Right cardiac atrium (tissue), 5 donors: ENCODE measurements at regions of chr1 and their contacts with region 1.

Region 1: DNA sequence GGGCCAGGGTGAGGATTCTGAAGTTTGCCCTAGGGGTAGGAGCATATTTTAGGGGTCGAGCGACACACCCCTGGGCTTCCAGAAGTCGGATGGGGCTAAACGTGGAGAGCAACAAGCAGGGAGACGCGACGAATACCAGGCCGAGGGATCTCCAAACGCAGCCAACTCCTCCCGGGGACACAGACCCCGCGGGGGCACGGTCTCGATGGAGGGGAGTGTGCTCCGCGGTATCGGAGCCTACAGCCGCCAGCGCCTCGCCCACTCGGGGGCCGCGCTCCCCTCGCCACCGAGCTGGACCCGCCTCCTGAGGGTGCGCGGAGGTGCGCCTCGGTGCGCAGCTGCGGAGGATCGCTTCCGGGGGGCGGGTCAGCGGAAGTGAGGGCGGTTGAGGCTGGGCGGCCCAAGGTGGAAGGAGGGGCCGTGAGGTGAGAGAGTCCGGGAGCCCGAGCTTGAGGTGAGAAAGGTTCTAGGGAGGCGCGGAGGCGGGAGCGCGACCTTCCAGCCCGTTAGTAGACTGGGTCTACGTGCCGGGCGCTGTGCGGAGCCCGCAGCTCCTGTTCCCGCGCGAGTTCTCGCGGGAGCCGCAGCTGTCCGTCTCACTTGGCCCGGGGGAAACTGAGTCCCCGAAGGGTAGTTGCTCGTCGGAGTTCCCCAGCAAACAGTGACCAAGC is at the start of gene MTFR1L:
- DNase-seq: peak; percentile 89 to 96 (median 95)
- ATAC-seq: peak; percentile 93
- H3K4me3 ChIP-seq: peak within 1 kb of the TSS; percentile 88
- H3K27ac ChIP-seq: peak within 1 kb of the TSS; percentile 90
- H3K4me1 ChIP-seq: peaks cover 14% of the 10 kb centered on the region
- H3K27me3 ChIP-seq: no peaks in the 10 kb centered on the region
- total RNA-seq, gene MTFR1L: 125 to 195 (median 180) TPM

Region 2: DNA sequence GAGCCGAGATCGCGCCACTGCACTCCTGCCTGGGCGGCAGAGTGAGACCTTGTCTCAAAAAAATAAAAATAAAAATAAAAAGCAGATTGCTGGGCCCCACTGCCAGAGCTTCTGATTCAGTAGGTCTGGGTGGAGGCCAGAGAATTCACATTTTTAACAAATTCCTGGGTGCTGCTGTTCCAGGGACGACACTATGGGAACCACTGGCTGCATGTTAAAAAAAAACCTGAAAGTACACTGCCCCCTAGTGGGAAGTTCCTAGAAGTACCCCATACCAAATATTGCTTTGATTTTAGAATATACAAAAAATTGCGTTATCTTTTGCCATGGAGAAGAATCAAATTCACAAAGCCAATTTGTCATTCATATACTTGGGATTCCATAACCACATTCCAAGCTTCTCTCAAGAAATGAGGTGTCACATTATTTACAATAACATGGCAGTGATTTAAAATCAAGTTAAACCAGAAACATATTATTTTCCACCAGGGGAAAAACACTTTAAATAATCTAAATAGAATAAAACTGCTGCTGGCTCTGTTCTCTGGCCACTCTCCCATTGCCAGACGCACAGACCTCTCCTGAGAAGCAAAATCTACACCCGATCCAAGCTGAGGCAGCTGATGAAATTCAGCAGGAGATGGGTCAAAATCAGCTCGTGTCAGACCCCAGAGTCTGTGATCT is 614.8 kb before region 1 on chr1:
- intact Hi-C with region 1: no loop called
- DNase-seq: peak in 1 of 3 donors; percentile 6
- ATAC-seq: peak in 1 of 2 donors; percentile 56
- H3K4me3 ChIP-seq: no peak overlapping the region
- H3K27ac ChIP-seq: no peak overlapping the region
- H3K4me1 ChIP-seq: no peaks in the 10 kb centered on the region
- H3K27me3 ChIP-seq: no peaks in the 10 kb centered on the region

Region 3: DNA sequence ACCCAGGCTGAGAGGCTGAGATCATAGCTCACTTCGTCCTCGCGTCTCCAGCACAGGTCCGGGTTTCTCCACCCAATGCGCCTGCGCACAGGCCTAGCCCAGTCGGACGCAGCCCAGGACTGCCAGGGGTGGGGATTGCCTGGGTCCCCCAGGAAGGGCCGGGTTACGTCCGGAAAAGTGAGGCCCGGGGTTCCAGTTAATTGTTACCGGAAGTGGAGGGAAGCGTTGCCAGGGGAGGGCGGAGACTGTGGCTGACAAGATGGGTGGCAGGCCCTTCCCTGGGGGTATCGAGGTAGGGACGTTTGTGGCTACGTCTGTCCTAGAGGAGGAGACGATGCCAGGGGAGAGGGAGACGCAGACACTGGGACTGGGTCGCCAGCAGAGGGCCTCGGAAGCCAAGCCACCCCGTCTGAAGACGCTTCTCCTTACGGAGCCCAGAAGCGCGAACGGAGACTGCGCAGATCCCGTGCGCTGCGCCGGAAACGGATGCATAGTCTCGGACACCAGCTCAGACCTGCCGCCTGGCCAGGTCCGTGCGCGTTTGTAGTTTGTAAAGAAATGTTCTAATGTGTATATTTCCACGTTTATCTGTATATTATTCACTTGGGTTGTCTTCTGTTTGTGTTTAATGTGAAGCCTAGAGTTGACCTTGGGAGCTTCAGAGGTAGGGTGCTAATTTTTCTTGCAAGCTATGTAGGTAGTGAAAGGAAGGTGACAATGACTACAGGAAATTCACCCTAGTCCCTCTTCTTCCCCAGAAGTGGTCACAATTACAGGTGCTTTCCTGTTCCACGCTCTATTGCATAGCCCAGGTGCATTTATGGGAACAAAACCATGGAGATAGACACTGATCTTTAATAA is 579.8 kb before region 1 on chr1:
- intact Hi-C with region 1: loop called in 1 of 4 experiments (anchors 10 kb)
- DNase-seq: peak; percentile 95 to 97 (median 97)
- ATAC-seq: peak; percentile 96
- H3K4me3 ChIP-seq: peak overlapping the region; percentile 64
- H3K27ac ChIP-seq: peak overlapping the region; percentile 96
- H3K4me1 ChIP-seq: no peaks in the 10 kb centered on the region
- H3K27me3 ChIP-seq: no peaks in the 10 kb centered on the region

Region 4: DNA sequence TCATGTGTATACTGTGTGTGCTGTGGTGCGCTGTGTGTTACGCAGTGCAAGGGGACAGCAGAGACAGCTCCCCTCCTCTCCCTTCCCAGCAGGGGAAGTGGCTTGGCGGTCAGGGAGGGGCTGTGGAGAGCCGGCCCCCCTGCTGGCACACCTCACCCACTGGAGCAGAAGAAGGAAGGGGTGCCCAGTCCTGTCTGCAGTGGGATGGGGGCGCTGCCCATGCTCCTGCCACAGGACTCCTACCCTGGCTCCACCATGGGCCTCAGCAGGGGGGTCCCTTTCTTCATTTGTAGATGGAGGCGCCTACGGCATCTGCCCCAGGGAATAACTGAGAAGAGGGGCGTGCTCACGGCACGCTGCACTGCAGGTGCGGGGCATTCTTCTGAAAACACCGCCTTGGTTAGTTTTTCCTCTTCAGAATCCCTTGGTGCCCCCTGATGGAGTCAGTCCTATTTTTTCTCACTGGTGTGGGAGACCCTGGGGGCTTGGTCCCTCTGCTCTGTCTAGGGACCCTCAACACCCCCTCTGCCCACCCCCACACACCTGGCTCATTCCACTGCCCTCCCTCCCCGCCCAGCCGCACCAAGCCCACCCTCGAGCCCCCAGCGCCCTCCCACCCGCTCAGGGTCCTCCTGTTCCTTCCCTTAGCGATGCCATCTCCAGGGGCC is 290.1 kb before region 1 on chr1:
- intact Hi-C with region 1: no loop called
- DNase-seq: no peak
- ATAC-seq: no peak
- H3K4me3 ChIP-seq: no peak overlapping the region
- H3K27ac ChIP-seq: no peak overlapping the region
- H3K4me1 ChIP-seq: no peaks in the 10 kb centered on the region
- H3K27me3 ChIP-seq: no peaks in the 10 kb centered on the region

Region 5: GRCh38 chr1:25543425-25544242 is 276.1 kb before region 1 on chr1 and contains the start of gene LDLRAP1:
- intact Hi-C with region 1: loop called in 1 of 4 experiments (anchors 10 kb)
- DNase-seq: peak; percentile 83 to 93 (median 90)
- ATAC-seq: peak; percentile 96
- H3K4me3 ChIP-seq: peak within 1 kb of the TSS; percentile 73
- H3K27ac ChIP-seq: peak within 1 kb of the TSS; percentile 83
- H3K4me1 ChIP-seq: no peaks in the 10 kb centered on the region
- H3K27me3 ChIP-seq: no peaks in the 10 kb centered on the region
- total RNA-seq, gene LDLRAP1: 7.6 to 10.2 (median 9.2) TPM